Activated CD8-positive, alpha-beta T cell treated with anti-CD3 and anti-CD28 coated beads, Interleukin-2, amount 10 ng/mL, durations not matched to agents 7 days and 5 days (primary cell): ENCODE measurements at regions of chr16 and their contacts with region 1.

Region 1: GRCh38 chr16:31458844-31459721 is at the start of gene ARMC5:
- DNase-seq: peak; percentile 98
- ATAC-seq: peak; percentile 74
- H3K4me3 Mint-ChIP-seq: peak within 1 kb of the TSS; percentile 91
- H3K27ac Mint-ChIP-seq: peak within 1 kb of the TSS; percentile 99
- H3K4me1 Mint-ChIP-seq: peaks cover 48% of the 10 kb centered on the region
- H3K27me3 Mint-ChIP-seq: no peaks in the 10 kb centered on the region
- total RNA-seq, gene ARMC5: 18.9 to 19.1 TPM

Region 2: GRCh38 chr16:31186176-31186575 is 272.9 kb before region 1 on chr16:
- CTCF ChIA-PET with region 1: interaction called, 3 read pairs
- POLR2A ChIA-PET with region 1: interaction called, 13 read pairs
- DNase-seq: no peak
- ATAC-seq: no peak
- H3K4me3 Mint-ChIP-seq: peak overlapping the region; percentile 46
- H3K27ac Mint-ChIP-seq: peak overlapping the region; percentile 79
- H3K4me1 Mint-ChIP-seq: peaks cover 88% of the 10 kb centered on the region
- H3K27me3 Mint-ChIP-seq: no peaks in the 10 kb centered on the region

Region 3: DNA sequence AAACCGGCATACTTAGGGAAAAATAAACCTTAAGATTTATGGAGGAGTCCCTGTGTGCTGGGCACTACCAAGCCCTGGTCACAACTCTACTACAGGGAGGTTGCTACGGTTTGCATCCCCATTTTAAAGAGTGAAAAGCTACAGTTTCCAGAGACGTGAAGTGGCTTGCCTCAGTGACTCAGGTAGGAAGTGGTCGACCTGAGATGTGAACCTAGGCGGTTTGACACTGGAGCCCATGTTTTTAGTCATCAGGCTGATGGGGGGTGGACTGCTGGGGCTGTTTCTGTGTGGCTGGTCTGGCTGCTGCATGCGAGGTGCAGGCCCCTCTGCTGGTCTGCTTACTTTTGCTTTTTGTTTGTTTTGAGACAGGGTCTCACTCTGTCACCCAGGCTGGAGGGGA is 37.5 kb before region 1 on chr16:
- CTCF ChIA-PET with region 1: interaction called, 4 read pairs
- POLR2A ChIA-PET with region 1: interaction called, 10 read pairs
- DNase-seq: peak; percentile 89
- ATAC-seq: peak; percentile 87
- H3K4me3 Mint-ChIP-seq: peak overlapping the region; percentile 60
- H3K27ac Mint-ChIP-seq: peak overlapping the region; percentile 94
- H3K4me1 Mint-ChIP-seq: peaks cover 77% of the 10 kb centered on the region
- H3K27me3 Mint-ChIP-seq: peaks cover 10% of the 10 kb centered on the region

Region 4: GRCh38 chr16:31476303-31477219 is 17.5 kb after region 1 on chr16:
- CTCF ChIA-PET with region 1: interaction called, 17 read pairs
- POLR2A ChIA-PET with region 1: interaction called, 5 read pairs
- DNase-seq: peak; percentile 92
- ATAC-seq: peak; percentile 90
- H3K4me3 Mint-ChIP-seq: peak overlapping the region; percentile 79
- H3K27ac Mint-ChIP-seq: peak overlapping the region; percentile 72
- H3K4me1 Mint-ChIP-seq: peaks cover 27% of the 10 kb centered on the region
- H3K27me3 Mint-ChIP-seq: peaks cover 44% of the 10 kb centered on the region

Region 5: DNA sequence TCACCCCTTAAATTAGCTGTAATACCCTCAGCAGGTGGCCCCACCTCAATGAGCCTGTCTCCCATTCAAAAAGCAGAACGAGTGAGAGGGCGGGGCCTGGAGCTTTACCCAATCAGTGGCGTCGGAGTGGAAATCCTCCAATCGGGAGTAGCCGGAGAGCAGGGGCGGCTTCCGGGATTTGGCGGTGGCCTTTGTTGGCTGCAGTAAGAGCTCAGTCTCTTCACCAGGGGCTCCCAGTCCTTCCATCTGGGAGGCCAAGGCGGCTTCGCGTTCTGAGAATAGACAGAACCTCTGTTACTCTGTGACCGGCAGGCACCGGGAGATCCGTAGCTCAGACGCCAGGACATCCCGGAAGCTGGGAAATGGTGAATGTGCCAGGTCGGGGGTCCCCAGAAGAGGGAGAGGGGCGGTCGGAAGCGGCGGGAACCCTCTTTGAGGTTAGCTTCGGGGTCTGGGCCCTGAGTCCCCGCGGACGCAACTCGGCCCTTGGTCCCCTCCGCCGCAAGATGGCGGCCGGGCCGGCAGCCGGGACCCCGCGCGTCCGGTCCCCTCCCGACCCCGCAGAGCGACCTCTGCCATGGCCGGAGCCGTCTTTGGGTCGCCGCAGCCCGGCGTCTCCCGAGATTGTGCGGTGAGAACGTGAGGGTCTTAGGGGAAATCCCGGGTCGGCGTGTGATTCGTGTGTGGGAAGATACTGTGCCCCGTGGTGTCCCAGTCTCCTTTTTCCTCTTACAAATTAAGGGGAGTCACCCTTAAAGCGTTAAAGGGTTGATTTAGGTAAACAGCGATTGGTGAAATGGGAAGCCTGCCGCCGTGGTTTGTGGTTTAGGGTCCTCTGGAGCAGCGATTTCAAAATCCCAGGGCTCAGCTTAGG is 254.2 kb after region 1 on chr16:
- CTCF ChIA-PET with region 1: interaction called, 11 read pairs
- POLR2A ChIA-PET with region 1: interaction called, 6 read pairs
- DNase-seq: peak; percentile 96
- ATAC-seq: peak; percentile 93
- H3K4me3 Mint-ChIP-seq: peak overlapping the region; percentile 98
- H3K27ac Mint-ChIP-seq: peak overlapping the region; percentile 99
- H3K4me1 Mint-ChIP-seq: peaks cover 61% of the 10 kb centered on the region
- H3K27me3 Mint-ChIP-seq: no peaks in the 10 kb centered on the region

Region 6: DNA sequence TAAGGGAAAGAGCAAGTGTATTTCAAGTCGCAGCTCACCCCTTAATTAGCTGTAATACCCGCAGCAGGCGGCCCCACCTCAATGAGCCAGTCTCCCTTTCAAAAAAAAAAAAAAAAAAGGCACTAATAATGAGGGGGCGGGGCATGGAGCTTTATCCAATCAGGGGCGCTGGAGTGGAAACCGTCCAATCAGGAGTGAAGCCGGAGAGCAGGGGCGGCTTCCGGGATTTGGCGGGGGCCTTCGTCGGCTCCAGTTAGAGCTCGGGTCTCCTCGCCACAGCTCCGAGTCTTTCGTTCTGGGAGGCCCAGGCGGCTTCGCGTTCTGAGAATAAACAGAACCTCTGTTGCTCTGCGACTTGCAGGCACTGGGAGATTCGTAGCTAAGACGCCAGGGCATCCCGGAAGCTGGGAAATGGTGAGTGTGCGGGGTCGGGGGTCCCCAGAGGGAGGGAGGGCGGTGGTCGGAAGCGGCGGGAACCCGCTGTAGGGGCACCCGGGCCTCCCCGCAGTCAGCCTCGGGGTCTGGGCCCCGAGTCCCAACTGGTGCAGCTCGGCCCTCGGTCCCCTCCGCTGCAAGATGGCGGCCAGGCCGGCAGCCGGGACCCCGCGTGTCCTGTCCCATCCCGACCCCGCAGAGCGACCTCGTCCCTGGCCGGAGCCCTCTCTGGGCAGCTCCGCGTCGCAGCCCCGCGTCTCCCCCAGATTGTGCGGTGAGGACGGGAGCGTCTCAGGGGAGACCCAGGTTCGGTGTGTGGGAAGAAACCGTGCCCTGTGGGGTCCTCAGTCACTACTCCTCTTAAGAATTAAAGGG is 414.7 kb after region 1 on chr16 and contains the start of gene ZNF267:
- CTCF ChIA-PET with region 1: interaction called, 76 read pairs
- POLR2A ChIA-PET with region 1: interaction called, 30 read pairs
- DNase-seq: peak; percentile 96
- ATAC-seq: peak; percentile 73
- H3K4me3 Mint-ChIP-seq: peak within 1 kb of the TSS; percentile 90
- H3K27ac Mint-ChIP-seq: peak within 1 kb of the TSS; percentile 97
- H3K4me1 Mint-ChIP-seq: peaks cover 81% of the 10 kb centered on the region
- H3K27me3 Mint-ChIP-seq: no peaks in the 10 kb centered on the region
- total RNA-seq, gene ZNF267: 43.9 to 49.8 TPM